Stomach (tissue), 19 donors: ENCODE measurements at regions of chr3 and their contacts with region 1.

Region 1: DNA sequence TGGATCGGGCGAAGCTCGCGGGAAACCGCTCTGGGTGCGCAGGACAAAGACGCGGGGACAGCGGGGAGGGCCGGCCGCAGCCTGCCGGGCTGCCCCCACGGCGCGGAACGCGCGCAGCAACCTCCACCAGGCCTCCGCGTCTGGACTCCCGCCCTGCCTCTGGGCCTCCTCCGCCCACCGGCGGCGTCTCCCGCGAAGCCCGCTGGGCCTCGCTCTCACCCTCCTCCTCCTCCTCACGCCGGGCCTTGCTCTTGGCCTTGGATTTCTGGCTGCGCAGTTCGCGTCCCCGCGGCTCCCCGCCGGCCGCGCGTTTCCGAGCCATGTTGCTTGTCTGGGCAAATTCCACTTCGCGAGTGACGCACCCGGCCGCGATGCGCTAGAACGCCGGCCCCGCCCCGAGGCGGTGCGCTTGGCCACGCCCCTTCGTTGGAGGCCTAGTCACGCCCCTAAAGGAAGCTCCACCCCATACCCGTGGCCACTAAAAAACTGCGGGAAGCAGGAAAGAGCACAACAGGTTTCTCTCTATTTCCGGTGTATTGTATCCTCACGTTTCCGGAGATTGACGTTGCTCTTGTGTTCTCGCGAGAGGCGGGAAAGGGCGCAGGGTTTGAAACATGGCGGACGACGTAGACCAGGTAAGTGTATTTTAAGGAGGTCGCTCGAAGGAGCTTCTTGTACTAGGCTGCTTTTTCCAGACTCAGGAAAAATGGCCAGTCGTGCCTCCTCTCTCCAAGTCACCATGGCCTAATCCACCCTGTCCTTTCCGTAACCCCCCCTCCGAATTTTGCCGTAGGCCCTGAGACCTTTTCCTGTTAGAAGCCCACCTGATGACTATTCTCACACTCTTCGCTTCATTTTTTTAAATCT is at the starts of genes LSM3 and XPC:
- DNase-seq: peak; percentile 98 to 99
- H3K4me3 ChIP-seq: peak within 1 kb of the TSS; percentile 59 to 80 (median 70)
- H3K27ac ChIP-seq: peak within 1 kb of the TSS; percentile 88 to 98 (median 95)
- H3K4me1 ChIP-seq: peaks cover 18 to 78% (median 49%) of the 10 kb centered on the region in 4 donors
- H3K27me3 ChIP-seq: no peaks in the 10 kb centered on the region
- CTCF ChIP-seq: no peak
- EP300 ChIP-seq: no peak
- POLR2A ChIP-seq: peak in 2 of 4 donors; percentile 75 to 76
- total RNA-seq, gene LSM3: 2.2 to 14.1 (median 6.1) TPM
- total RNA-seq, gene XPC: 34.0 to 51.0 (median 41.4) TPM

Region 2: GRCh38 chr3:13556207-13556606 is 622.3 kb before region 1 on chr3:
- intact Hi-C with region 1: no loop called
- DNase-seq: no peak
- H3K4me3 ChIP-seq: no peak overlapping the region
- H3K27ac ChIP-seq: no peak overlapping the region
- H3K4me1 ChIP-seq: peaks cover 0 to 9% (median 3%) of the 10 kb centered on the region in 4 donors
- H3K27me3 ChIP-seq: peaks cover 0 to 35% (median 4%) of the 10 kb centered on the region in 3 donors
- CTCF ChIP-seq: no peak
- EP300 ChIP-seq: no peak
- POLR2A ChIP-seq: no peak

Region 3: DNA sequence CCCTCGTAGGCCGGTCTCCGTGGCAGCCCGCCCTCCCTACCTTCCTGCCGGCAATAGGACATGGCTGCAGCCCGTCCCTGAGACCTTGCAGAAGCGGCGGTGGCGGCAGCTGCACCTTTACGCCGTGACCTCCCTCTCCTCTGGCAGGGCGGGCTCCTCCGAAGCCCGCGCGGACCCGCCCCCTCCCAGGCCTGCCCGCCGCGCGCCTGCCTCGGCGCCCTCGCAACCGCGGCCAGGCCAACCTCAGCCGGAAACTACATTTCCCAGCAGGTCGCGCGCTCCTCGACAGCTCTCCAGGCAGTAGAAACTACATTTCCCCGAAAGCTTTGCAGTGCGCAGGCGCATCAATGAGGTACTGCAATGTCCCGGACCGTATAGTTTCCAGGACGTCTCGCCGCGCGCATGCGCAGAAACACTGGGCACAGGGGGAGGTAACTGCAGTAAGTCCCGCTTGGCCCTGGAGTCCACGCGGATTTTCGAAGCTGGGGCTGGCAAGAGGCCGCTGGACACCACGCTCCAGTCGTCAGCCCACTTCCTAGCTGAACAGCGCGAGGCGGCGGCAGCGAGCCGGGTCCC is 53.8 kb before region 1 on chr3 and contains the starts of genes CHCHD4 and TMEM43:
- intact Hi-C with region 1: loop called (anchors 10 kb)
- DNase-seq: peak; percentile 99 to 100
- H3K4me3 ChIP-seq: peak within 1 kb of the TSS; percentile 66 to 98 (median 87)
- H3K27ac ChIP-seq: peak within 1 kb of the TSS; percentile 90 to 97 (median 93)
- H3K4me1 ChIP-seq: peaks cover 25 to 52% (median 39%) of the 10 kb centered on the region in 4 donors
- H3K27me3 ChIP-seq: no peaks in the 10 kb centered on the region
- CTCF ChIP-seq: no peak
- EP300 ChIP-seq: no peak
- POLR2A ChIP-seq: no peak
- total RNA-seq, gene CHCHD4: 1.7 to 11.7 (median 9.0) TPM
- total RNA-seq, gene TMEM43: 28.6 to 67.4 (median 51.9) TPM

Region 4: DNA sequence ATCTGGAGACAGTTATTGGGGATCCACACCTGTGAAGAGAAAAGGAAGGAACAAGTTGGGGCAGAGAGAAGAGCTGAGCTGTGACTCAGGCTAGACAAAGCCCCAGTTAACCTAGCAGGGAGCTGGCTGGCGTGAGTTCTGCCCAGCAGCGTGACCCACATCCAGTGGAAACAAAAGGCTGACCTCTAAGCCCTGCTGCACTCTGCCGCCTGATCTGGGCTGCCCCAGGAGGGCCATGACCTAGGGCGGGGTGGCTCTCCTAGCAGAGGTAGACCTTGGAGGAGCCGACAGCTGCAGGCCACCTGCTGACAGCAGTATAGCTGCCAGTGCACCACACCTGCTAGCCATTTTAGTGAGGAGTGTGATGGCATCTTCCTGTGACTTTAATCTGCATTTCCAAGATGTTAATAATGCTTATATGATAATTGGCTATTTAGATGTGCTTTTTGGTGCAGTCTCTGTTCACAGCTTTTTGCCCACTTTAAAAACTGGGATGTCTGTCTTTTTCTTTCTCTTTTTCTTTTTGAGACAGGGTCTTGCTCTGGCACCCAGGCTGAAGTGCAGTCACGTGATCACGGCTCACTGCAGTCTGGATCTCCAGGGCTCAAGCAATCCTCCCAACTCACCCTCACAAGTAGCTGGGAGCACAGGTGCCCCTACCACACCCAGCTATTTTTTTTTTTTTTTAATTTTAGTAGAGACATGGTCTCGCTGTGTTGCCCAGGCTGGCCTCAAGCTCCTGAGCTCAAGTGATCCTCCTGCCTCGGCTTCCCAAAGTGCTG is 78.3 kb after region 1 on chr3:
- intact Hi-C with region 1: no loop called
- DNase-seq: peak in 1 of 2 donors; percentile 56
- H3K4me3 ChIP-seq: no peak overlapping the region
- H3K27ac ChIP-seq: peak overlapping the region in 1 of 5 donors; percentile 13
- H3K4me1 ChIP-seq: peaks cover 0 to 11% (median 7%) of the 10 kb centered on the region in 4 donors
- H3K27me3 ChIP-seq: peaks cover 0 to 3% (median 0%) of the 10 kb centered on the region in 3 donors
- CTCF ChIP-seq: no peak
- EP300 ChIP-seq: no peak
- POLR2A ChIP-seq: no peak

Region 5: GRCh38 chr3:14791343-14791945 is 613.0 kb after region 1 on chr3:
- intact Hi-C with region 1: no loop called
- DNase-seq: peak; percentile 70 to 87
- H3K4me3 ChIP-seq: no peak overlapping the region
- H3K27ac ChIP-seq: no peak overlapping the region
- H3K4me1 ChIP-seq: peaks cover 0 to 13% (median 4%) of the 10 kb centered on the region in 4 donors
- H3K27me3 ChIP-seq: peaks cover 0 to 15% (median 0%) of the 10 kb centered on the region in 3 donors
- CTCF ChIP-seq: peak in 5 of 7 experiments; percentile 41 to 71 (median 54)
- EP300 ChIP-seq: no peak
- POLR2A ChIP-seq: no peak